ENCODE measurements at regions of chr1 and their contacts with region 1.

Region 1: GRCh38 chr1:6185635-6186382 is 5.7 kb upstream of the CHD5 start:
- H3K4me3 ChIP-seq: no peak overlapping the region
- H3K27ac ChIP-seq: no peak overlapping the region
- H3K4me1 ChIP-seq: no peaks in the 10 kb centered on the region
- CTCF ChIP-seq: peak; percentile 13; the same call in 1 of the 2 replicates

Region 2: DNA sequence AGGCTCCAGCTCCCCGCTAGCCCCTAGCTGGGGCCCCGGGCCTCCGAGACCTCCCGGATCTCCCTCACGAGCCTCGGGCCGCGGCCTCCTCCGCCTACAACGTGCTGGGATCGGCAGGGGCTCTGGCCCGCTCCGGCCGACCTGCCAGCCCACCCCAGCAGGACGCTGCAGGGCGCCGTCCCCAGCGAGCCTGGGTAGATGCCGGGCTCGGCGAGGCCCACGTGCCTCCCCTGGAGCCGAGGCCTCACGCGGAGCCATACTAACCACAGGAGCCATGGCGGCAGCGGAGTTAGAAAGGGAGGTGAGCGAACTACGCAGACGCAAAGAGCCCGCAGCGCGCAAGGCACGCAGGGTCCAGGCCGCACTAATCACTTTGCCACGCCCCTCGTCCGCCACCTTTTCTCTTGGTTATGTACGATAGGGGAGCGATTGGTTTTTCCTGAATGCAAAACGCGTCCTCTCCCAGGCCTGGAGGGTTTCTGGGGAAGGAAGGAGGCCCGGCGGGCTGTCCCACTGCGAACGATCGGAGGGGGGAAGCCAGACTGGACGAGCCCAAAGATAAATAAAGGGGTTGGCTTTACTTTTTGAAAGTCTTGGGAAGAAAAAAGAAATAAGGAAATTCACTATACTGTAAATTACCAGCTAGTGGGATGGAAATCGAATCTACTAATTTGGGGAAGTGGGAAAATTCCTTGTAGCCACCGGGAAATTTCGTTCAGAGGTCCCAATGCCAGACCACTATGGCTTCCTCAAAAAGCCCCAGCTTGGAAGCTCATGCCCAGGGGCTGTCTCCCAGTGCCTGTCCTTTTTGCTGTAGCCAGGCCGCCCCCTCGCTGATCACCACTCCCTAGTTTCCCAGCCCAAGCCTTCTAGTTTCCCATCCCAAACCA is 13.7 kb after region 1 on chr1 and contains the start of gene RPL22:
- CTCF ChIA-PET with region 1: interaction called, 18 read pairs
- POLR2A ChIA-PET with region 1: interaction called, 4 read pairs
- H3K4me3 ChIP-seq: peak within 1 kb of the TSS; percentile 99
- H3K27ac ChIP-seq: peak within 1 kb of the TSS; percentile 76
- H3K4me1 ChIP-seq: peaks cover 4% of the 10 kb centered on the region; the same call in 1 of the 2 replicates
- CTCF ChIP-seq: no peak

Region 3: DNA sequence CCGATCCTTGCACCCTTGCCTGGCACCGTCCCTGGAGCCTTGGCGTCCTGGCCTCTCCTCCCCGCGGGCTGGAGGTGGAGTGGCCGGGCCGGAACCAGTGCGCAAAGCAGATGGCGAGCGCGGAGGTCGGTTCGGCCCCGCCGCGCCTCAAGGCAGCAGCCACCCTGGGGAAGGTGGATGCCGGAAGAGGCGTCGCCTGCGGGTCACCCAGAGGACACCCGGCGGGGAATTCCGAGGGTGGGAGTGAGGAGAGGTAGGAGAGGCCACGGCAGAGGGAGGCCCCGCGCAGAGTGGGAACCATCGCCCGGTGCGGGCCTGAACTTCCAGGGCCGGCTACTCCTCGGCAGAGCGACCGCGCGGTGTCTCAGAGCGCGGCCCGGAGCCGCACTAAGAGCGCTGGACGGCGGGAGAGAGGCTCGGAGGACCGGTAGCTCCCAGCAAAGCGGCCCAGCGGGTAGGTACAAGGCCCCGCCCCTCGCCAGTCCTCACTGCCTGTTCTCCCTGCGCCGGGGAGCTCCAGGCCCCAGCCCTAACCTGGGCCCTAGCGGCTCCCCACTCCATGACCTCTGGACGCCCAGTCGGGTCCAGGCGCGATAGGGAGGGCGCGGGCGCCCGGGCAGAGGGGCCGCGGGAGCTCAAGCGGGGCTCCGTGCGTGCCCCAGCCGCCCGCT is 20.2 kb after region 1 on chr1 and contains the start of gene RNF207:
- CTCF ChIA-PET with region 1: interaction called, 18 read pairs
- POLR2A ChIA-PET with region 1: interaction called, 4 read pairs
- H3K4me3 ChIP-seq: peak within 1 kb of the TSS; percentile 63
- H3K27ac ChIP-seq: peak within 1 kb of the TSS; percentile 52; the same call in 1 of the 2 replicates
- H3K4me1 ChIP-seq: no peaks in the 10 kb centered on the region
- CTCF ChIP-seq: no peak

Measured in HEK293 (cell line).